OCI-LY7 (cell line): ENCODE measurements at regions of chr4 and their contacts with region 1.

Region 1: GRCh38 chr4:21790438-21791029 is 158.0 kb downstream of the KCNIP4 start:
- DNase-seq: peak; percentile 20
- H3K4me3 ChIP-seq: no peak overlapping the region
- H3K27ac ChIP-seq: no peak overlapping the region
- H3K4me1 ChIP-seq: no peaks in the 10 kb centered on the region
- CTCF ChIP-seq: peak; percentile 87

Region 2: GRCh38 chr4:22389240-22389870 is 598.8 kb after region 1 on chr4:
- CTCF ChIA-PET with region 1: interaction called, 3 read pairs
- POLR2A ChIA-PET with region 1: no interaction called
- intact Hi-C with region 1: loop called (anchors 1 kb)
- DNase-seq: peak; percentile 51
- H3K4me3 ChIP-seq: no peak overlapping the region
- H3K27ac ChIP-seq: no peak overlapping the region
- H3K4me1 ChIP-seq: no peaks in the 10 kb centered on the region
- CTCF ChIP-seq: peak; percentile 88